HEK293 (cell line): ENCODE measurements at regions of chr5 and their contacts with region 1.

Region 1: GRCh38 chr5:54492178-54492577 is 25.4 kb upstream of the SNX18 start:
- H3K4me3 ChIP-seq: no peak overlapping the region
- H3K27ac ChIP-seq: no peak overlapping the region
- H3K4me1 ChIP-seq: no peaks in the 10 kb centered on the region
- CTCF ChIP-seq: no peak

Region 2: DNA sequence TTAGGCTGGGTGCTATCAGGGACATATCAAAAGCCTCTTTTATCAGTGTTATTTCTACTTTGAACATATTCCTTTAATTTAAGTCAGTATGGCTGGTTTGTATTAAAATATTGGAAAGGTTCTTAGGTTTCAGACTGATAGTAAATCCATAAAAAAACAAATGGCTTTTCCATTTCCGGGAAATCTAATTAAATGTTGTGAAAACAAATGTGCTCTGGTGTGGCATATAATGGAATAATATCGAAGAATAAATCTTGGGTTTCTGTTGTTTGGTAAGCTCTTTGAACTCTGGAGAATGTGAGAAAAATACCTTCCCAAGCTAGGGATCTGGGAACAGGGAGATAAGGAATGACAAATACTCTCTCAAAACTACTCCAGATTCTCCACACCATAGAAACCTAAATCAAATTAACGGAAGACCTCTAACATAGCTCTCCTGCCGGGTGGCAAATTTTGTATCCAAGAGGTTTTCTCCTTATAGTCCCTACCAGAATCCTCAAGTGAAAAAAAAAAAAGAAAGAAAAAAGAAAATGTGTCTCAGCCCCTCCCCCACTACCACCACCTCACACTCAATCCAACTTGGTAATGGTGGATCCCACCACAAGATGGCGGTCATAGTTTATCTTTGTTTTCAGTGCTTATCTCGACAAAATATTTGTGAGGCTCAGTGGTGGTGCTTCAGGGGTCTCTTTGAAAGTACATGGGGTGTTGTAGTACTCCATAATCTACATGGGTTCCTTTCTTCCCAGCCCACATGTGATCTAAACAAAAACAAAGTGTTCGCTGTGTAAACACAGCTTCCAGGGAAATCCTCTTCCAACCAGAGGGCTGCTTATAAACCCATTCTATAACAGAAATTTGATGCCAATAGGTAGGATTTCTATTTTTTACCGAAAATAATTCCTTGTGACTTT is 1066.3 kb before region 1 on chr5:
- CTCF ChIA-PET with region 1: no interaction called
- POLR2A ChIA-PET with region 1: no interaction called
- H3K4me3 ChIP-seq: no peak overlapping the region
- H3K27ac ChIP-seq: no peak overlapping the region
- H3K4me1 ChIP-seq: peaks cover 4% of the 10 kb centered on the region; the same call in 1 of the 2 replicates
- CTCF ChIP-seq: peak; percentile 59

Region 3: DNA sequence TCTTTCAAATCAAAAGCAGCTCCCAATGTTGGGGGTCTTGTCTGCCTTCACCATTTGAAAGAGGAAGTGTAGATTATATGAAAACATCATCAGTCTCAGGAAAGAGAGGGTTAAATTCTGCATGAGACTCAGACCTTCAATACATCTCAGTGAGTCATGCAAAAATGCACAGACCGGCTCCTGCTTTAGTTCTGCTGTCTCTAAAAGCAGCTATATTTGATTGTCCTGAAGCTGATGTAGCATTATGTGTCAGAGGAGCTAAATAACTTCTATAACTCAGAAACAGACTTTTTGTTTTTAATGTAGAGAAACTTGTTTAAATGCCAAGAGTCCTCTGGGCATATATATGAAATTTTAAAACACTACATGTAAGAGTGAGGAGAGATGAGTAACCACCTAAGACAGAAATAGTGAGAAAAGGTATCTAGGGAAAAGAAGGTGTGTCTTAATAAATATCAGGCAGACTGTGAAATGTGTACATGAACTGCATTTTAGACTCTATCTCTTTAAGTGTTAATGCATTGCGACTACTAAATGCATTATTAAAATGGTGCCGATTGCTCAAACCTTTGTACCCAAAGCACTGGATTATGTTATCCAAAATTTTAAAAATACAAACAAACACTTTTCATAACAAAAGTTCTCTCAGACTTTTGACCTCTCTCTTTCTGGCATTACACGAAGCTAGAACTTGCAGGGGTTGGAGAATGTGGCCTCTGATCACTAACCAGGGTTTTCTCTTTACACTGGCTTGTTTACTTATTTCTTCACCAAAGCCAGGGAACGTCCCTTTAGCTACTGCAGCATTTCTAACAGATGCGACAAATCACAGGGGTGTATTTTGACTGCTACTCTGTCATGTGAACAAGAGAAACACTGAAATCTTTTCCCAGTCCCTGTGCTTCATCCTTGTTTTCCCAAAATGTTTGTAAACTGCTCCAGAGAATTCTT is 484.1 kb before region 1 on chr5:
- CTCF ChIA-PET with region 1: no interaction called
- POLR2A ChIA-PET with region 1: no interaction called
- H3K4me3 ChIP-seq: no peak overlapping the region
- H3K27ac ChIP-seq: no peak overlapping the region
- H3K4me1 ChIP-seq: no peaks in the 10 kb centered on the region
- CTCF ChIP-seq: no peak

Region 4: GRCh38 chr5:54234304-54234933 is 257.8 kb before region 1 on chr5:
- CTCF ChIA-PET with region 1: interaction called, 32 read pairs
- POLR2A ChIA-PET with region 1: no interaction called
- H3K4me3 ChIP-seq: no peak overlapping the region
- H3K27ac ChIP-seq: no peak overlapping the region
- H3K4me1 ChIP-seq: no peaks in the 10 kb centered on the region
- CTCF ChIP-seq: no peak

Region 5: GRCh38 chr5:54324651-54325271 is 167.4 kb before region 1 on chr5:
- CTCF ChIA-PET with region 1: no interaction called
- POLR2A ChIA-PET with region 1: no interaction called
- H3K4me3 ChIP-seq: no peak overlapping the region
- H3K27ac ChIP-seq: no peak overlapping the region
- H3K4me1 ChIP-seq: no peaks in the 10 kb centered on the region
- CTCF ChIP-seq: no peak

Region 6: DNA sequence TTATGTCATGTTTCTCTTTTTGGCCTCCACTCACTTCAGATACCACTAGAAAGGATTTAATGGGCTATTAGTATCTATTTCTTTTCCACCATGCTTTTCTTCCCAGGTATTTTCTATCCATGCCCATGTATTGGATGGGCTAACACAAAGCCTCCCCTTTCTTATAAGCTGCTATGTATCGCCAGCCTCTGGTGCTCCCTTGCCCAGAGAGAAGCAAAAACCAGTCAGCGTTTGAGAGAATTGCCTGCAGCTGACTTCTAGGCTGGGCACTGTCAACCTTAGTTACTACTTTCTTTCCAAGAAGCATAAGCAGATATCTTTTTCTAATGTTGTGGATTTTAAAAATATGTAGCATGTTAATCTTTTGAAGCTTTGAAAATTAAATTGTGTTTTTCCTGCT is 66.9 kb before region 1 on chr5:
- CTCF ChIA-PET with region 1: interaction called, 11 read pairs
- POLR2A ChIA-PET with region 1: no interaction called
- H3K4me3 ChIP-seq: no peak overlapping the region
- H3K27ac ChIP-seq: no peak overlapping the region
- H3K4me1 ChIP-seq: no peaks in the 10 kb centered on the region
- CTCF ChIP-seq: no peak

Region 7: DNA sequence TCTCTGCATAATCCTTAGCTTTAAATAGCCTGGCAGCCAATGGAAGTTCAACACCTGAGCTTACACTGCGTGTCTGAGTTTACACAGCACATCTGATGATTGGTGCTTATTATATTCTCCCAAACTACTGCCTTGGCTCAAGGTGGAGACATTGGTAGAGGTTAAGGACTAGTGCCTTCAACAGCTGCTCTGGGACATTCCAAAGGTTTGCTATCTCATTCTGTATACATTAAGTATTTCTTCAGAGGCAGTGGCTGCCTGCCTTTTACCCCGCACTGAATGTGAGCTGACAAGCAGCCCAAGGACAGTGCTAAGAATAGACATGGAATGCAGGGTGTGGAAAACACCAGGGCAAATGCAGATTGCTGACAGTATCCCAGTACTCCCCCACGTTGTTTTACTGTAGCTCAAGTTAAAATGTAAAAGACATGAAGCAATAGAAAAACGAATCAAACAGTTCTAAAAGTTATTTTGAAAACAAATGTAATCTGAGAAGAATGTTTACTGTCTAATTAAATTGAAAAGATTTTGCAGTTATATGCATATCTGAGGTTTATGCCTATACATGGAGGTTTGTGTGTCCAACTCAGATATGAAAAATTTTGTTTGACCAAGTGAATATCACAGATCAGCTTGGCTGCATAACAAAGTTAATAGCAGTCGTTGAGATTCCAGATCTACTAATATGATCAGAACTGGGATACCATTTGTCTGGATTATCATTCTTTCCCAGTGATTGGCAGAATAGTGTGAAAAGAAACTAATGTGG is 34.9 kb before region 1 on chr5:
- CTCF ChIA-PET with region 1: interaction called, 10 read pairs
- POLR2A ChIA-PET with region 1: no interaction called
- H3K4me3 ChIP-seq: no peak overlapping the region
- H3K27ac ChIP-seq: no peak overlapping the region
- H3K4me1 ChIP-seq: no peaks in the 10 kb centered on the region
- CTCF ChIP-seq: no peak

Region 8: DNA sequence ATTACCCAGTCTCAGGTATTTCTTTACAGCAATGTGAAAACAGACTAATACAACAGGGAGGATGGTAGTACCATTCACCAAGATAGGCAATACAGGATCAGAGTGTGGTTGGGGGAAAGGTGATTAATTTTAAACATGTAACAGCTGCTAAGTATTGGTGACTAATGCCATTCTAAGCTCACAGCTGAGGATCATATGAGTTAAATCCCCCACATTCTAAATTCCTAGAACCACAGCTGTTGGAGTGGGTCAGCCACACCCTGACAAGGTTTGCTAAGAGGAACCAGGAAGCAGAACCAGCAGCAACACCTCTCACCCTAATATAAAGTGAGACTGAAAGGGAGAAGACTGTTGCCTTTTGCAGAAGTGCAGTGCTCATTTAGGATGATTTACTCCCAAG is 11.9 kb before region 1 on chr5:
- CTCF ChIA-PET with region 1: interaction called, 26 read pairs
- POLR2A ChIA-PET with region 1: no interaction called
- H3K4me3 ChIP-seq: no peak overlapping the region
- H3K27ac ChIP-seq: no peak overlapping the region
- H3K4me1 ChIP-seq: no peaks in the 10 kb centered on the region
- CTCF ChIP-seq: no peak

Region 9: GRCh38 chr5:54524704-54525103 is 32.5 kb after region 1 on chr5:
- CTCF ChIA-PET with region 1: no interaction called
- POLR2A ChIA-PET with region 1: no interaction called
- H3K4me3 ChIP-seq: no peak overlapping the region
- H3K27ac ChIP-seq: no peak overlapping the region; the same call in 1 of the 2 replicates
- H3K4me1 ChIP-seq: peaks cover 17% of the 10 kb centered on the region; the same call in 1 of the 2 replicates
- CTCF ChIP-seq: no peak